Vagina (tissue), 2 donors: ENCODE measurements at regions of chr12 and their contacts with region 1.

Region 1: DNA sequence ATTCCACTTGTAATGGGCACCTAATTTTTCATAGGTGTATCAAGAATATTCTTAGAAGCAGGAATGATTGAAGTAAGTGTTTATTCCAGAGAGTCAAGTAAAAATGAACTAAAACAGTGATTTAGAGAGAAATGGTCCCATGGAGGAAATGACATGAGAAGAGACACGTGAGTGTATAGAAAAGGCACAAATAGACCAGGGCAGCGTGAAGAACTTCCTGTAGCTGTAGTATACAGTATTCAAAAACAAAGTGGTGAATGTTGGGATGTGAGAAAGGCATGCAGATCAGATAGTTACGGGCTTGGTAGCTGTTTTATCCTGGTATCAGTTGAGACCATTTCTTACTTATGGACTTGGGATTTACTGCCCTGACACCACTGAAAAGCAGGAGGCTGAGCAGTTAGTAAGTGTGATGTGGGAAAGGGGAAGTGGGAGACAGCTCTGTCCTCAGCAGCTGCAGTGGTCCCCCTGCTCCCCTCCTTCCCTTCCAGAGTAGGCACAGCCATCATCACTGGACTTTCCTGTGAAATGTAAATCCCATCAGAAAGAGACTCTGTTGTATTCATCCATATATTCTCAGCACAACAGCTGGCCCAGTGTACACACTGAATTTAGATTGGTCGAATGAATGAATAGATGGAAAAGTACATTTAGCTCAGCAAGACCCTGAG is 16.8 kb upstream of the TESPA1 start:
- DNase-seq: no peak
- H3K4me3 ChIP-seq: no peak overlapping the region
- H3K27ac ChIP-seq: no peak overlapping the region
- H3K4me1 ChIP-seq: no peaks in the 10 kb centered on the region
- H3K27me3 ChIP-seq: no peaks in the 10 kb centered on the region
- CTCF ChIP-seq: no peak
- POLR2A ChIP-seq: no peak

Region 2: DNA sequence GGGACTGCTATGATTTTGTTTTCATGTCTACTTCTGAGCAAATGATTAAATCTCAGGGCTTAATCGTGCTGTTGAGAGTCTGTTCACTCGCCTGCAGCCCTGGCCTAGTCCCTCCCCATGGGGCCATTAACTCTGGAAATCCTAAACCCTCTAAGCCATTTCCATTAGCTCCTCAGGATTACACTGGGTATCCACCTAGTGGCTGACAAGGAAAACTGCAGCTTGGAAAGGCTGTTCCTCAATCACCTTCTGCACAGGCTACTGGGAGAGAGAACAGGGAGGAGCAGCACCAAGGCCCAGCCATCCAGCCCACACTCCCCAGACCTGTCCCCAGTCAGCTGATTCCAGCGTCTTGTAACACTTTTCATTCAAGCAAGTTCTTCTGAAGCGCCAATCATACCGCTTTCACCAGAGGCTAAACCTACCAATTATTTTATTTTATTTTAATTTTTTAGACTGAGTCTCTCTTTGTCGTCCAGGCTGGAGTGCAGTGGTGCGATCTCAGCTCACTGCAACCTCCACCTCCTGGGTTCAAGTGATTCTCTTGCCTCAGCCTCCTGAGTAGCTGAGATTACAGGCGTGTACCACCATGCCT is 67.2 kb after region 1 on chr12:
- intact Hi-C with region 1: loop called (anchors 10 kb)
- DNase-seq: no peak
- H3K4me3 ChIP-seq: no peak overlapping the region
- H3K27ac ChIP-seq: no peak overlapping the region
- H3K4me1 ChIP-seq: no peaks in the 10 kb centered on the region
- H3K27me3 ChIP-seq: no peaks in the 10 kb centered on the region
- CTCF ChIP-seq: peak; percentile 14 to 45 (median 26)
- POLR2A ChIP-seq: no peak